ENCODE measurements at regions of chr11 and their contacts with region 1.

Region 1: GRCh38 chr11:102287964-102288724 is 29.1 kb upstream of the BIRC3 start:
- DNase-seq: peak; percentile 84
- ATAC-seq: peak; percentile 83
- H3K4me3 ChIP-seq: peak overlapping the region; percentile 27 to 70 (median 48)
- H3K4me3 Mint-ChIP-seq: peak overlapping the region; percentile 64
- H3K27ac ChIP-seq: peak overlapping the region in 1 of 2 donors; percentile 8
- H3K27ac Mint-ChIP-seq: peak overlapping the region; percentile 69
- H3K4me1 ChIP-seq: peaks cover 26 to 34% of the 10 kb centered on the region in 2 donors
- H3K4me1 Mint-ChIP-seq: peaks cover 46% of the 10 kb centered on the region
- H3K27me3 ChIP-seq: no peaks in the 10 kb centered on the region
- H3K27me3 Mint-ChIP-seq: no peaks in the 10 kb centered on the region
- CTCF ChIP-seq: peak; percentile 80

Region 2: GRCh38 chr11:102317099-102317767 is 29.1 kb after region 1 on chr11 and contains the start of gene BIRC3:
- CTCF ChIA-PET with region 1: interaction called, 588 read pairs
- POLR2A ChIA-PET with region 1: interaction called, 105 read pairs
- intact Hi-C with region 1: loop called (anchors 1 kb)
- DNase-seq: peak; percentile 99
- ATAC-seq: peak; percentile 87
- H3K4me3 ChIP-seq: peak within 1 kb of the TSS; percentile 76 to 100 (median 92)
- H3K4me3 Mint-ChIP-seq: peak within 1 kb of the TSS; percentile 100
- H3K27ac ChIP-seq: peak within 1 kb of the TSS; percentile 96 to 98
- H3K27ac Mint-ChIP-seq: peak within 1 kb of the TSS; percentile 96
- H3K4me1 ChIP-seq: peaks cover 53 to 58% of the 10 kb centered on the region in 2 donors
- H3K4me1 Mint-ChIP-seq: peaks cover 64% of the 10 kb centered on the region
- H3K27me3 ChIP-seq: no peaks in the 10 kb centered on the region
- H3K27me3 Mint-ChIP-seq: no peaks in the 10 kb centered on the region
- CTCF ChIP-seq: no peak
- total RNA-seq, gene BIRC3: 419 and 428 TPM in 2 replicates

Region 3: DNA sequence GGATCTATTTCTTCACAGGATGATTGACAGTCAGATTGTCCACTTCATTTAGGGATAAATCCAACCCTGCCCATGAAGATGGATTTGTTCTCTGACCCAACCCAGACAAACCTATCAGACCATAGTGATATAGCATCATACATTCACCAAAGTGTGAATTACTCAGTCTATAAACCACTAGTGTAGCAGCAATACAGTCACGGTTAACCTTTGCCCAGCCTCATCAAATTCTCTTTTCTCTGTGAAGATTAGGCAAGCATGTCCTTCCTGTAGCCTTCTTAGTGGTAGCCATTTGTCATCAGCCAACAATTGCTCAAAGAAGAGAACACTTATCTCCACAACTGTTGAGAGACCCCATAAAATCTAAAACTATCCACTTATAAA is 44.5 kb after region 1 on chr11:
- CTCF ChIA-PET with region 1: interaction called, 24 read pairs
- POLR2A ChIA-PET with region 1: no interaction called
- intact Hi-C with region 1: no loop called
- DNase-seq: no peak
- ATAC-seq: no peak
- H3K4me3 ChIP-seq: no peak overlapping the region
- H3K4me3 Mint-ChIP-seq: no peak overlapping the region
- H3K27ac ChIP-seq: peak overlapping the region in 1 of 2 donors; percentile 64
- H3K27ac Mint-ChIP-seq: peak overlapping the region; percentile 47
- H3K4me1 ChIP-seq: peaks cover 0 to 3% of the 10 kb centered on the region in 2 donors
- H3K4me1 Mint-ChIP-seq: peaks cover 26% of the 10 kb centered on the region
- H3K27me3 ChIP-seq: no peaks in the 10 kb centered on the region
- H3K27me3 Mint-ChIP-seq: no peaks in the 10 kb centered on the region
- CTCF ChIP-seq: no peak

Region 4: GRCh38 chr11:102346748-102347461 is 58.8 kb after region 1 on chr11 and contains the start of gene BIRC2:
- CTCF ChIA-PET with region 1: interaction called, 295 read pairs
- POLR2A ChIA-PET with region 1: no interaction called
- intact Hi-C with region 1: loop called (anchors 1 kb)
- DNase-seq: peak; percentile 98
- ATAC-seq: peak; percentile 88
- H3K4me3 ChIP-seq: peak within 1 kb of the TSS; percentile 63 to 98 (median 92)
- H3K4me3 Mint-ChIP-seq: peak within 1 kb of the TSS; percentile 90
- H3K27ac ChIP-seq: peak within 1 kb of the TSS; percentile 94 to 97
- H3K27ac Mint-ChIP-seq: peak within 1 kb of the TSS; percentile 98
- H3K4me1 ChIP-seq: peaks cover 14 to 21% of the 10 kb centered on the region in 2 donors
- H3K4me1 Mint-ChIP-seq: peaks cover 36% of the 10 kb centered on the region
- H3K27me3 ChIP-seq: no peaks in the 10 kb centered on the region
- H3K27me3 Mint-ChIP-seq: no peaks in the 10 kb centered on the region
- CTCF ChIP-seq: peak; percentile 73
- total RNA-seq, gene BIRC2: 46.7 and 51.0 TPM in 2 replicates

Region 5: GRCh38 chr11:102390667-102391465 is 102.7 kb after region 1 on chr11:
- CTCF ChIA-PET with region 1: interaction called, 16 read pairs
- POLR2A ChIA-PET with region 1: no interaction called
- intact Hi-C with region 1: no loop called
- DNase-seq: peak; percentile 74
- ATAC-seq: peak; percentile 88
- H3K4me3 ChIP-seq: no peak overlapping the region
- H3K4me3 Mint-ChIP-seq: no peak overlapping the region
- H3K27ac ChIP-seq: no peak overlapping the region
- H3K27ac Mint-ChIP-seq: peak overlapping the region; percentile 46
- H3K4me1 ChIP-seq: no peaks in the 10 kb centered on the region
- H3K4me1 Mint-ChIP-seq: peaks cover 15% of the 10 kb centered on the region
- H3K27me3 ChIP-seq: no peaks in the 10 kb centered on the region
- H3K27me3 Mint-ChIP-seq: no peaks in the 10 kb centered on the region
- CTCF ChIP-seq: peak; percentile 90

Region 6: DNA sequence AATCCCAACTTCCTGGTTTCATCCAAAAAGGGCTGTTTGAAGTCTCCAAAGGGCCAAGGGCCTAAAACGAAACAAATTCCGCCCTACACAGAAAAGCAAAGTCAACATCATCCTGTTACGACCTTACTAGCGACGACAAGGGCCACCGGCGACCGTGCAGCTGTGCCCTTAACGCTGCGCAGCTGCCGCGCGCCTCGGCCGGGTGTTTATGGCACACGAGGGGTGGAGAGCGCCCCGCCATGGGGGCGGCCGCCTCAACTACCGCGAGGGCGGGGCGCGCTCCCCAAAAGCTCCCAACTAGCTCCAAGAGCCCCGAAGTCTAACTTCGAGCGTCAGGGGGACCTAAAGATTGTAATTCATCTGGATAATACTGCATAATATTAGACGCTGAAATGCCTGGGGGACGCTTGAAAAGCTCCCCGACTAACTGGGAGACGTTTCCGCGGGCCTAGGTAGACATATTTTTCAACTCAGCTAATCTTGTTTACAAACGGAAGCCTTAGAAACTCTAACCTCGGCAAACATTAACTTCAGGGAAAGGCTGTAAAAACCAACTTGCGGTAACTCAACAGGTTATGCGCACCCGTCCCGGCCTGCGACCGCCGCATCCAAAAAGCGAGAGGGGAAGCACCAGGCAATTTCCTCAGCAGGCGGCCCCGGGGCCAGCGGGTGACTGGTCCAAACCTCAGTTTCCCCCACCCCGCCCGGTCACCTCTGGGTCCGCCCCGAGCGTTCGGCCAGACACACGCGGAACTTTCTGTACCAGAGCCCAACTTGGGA is 163.7 kb after region 1 on chr11:
- CTCF ChIA-PET with region 1: interaction called, 3 read pairs
- POLR2A ChIA-PET with region 1: no interaction called
- intact Hi-C with region 1: loop called (anchors 5 kb)
- DNase-seq: peak; percentile 88
- ATAC-seq: peak; percentile 58
- H3K4me3 ChIP-seq: peak overlapping the region; percentile 83 to 98 (median 91)
- H3K4me3 Mint-ChIP-seq: peak overlapping the region; percentile 98
- H3K27ac ChIP-seq: peak overlapping the region; percentile 82 to 87
- H3K27ac Mint-ChIP-seq: peak overlapping the region; percentile 98
- H3K4me1 ChIP-seq: peaks cover 56 to 59% of the 10 kb centered on the region in 2 donors
- H3K4me1 Mint-ChIP-seq: peaks cover 73% of the 10 kb centered on the region
- H3K27me3 ChIP-seq: no peaks in the 10 kb centered on the region
- H3K27me3 Mint-ChIP-seq: no peaks in the 10 kb centered on the region
- CTCF ChIP-seq: no peak

Region 7: GRCh38 chr11:102666331-102666957 is 378.3 kb after region 1 on chr11:
- CTCF ChIA-PET with region 1: interaction called, 33 read pairs
- POLR2A ChIA-PET with region 1: no interaction called
- intact Hi-C with region 1: loop called (anchors 5 kb)
- DNase-seq: peak; percentile 55
- ATAC-seq: peak; percentile 36
- H3K4me3 ChIP-seq: no peak overlapping the region
- H3K4me3 Mint-ChIP-seq: no peak overlapping the region
- H3K27ac ChIP-seq: no peak overlapping the region
- H3K27ac Mint-ChIP-seq: no peak overlapping the region
- H3K4me1 ChIP-seq: peaks cover 0 to 5% of the 10 kb centered on the region in 2 donors
- H3K4me1 Mint-ChIP-seq: no peaks in the 10 kb centered on the region
- H3K27me3 ChIP-seq: no peaks in the 10 kb centered on the region
- H3K27me3 Mint-ChIP-seq: peaks cover 3% of the 10 kb centered on the region
- CTCF ChIP-seq: peak; percentile 82